HepG2 (cell line): ENCODE measurements at regions of chr1 and their contacts with region 1.

Region 1: DNA sequence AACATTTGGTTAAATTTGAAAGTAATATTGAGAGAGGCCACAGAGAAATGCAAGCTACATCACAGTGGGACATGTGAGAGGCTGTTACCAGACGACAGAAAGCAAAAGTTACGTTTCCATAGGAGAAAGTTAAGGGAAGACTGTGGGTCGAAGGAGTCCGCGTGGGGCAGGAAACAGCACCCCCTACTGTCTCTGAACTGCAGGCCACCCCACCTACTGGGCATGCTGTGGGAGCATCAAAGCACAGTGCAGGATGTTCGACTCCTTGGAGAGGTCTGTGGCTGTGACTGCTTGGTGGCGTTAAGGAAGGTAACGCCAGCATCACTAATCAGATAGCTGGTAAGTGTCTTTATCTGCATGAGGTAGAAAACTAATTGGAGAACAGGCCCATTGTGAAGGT is 123.9 kb downstream of the PTBP2 start:
- DNase-seq: peak; percentile 15
- ATAC-seq: peak; percentile 100
- H3K4me3 ChIP-seq: no peak overlapping the region
- H3K27ac ChIP-seq: no peak overlapping the region
- H3K4me1 ChIP-seq: no peaks in the 10 kb centered on the region
- H3K27me3 ChIP-seq: no peaks in the 10 kb centered on the region
- CTCF ChIP-seq: peak; percentile 91
- EP300 ChIP-seq: no peak
- POLR2A ChIP-seq: no peak
- RAD21 ChIP-seq: peak; percentile 77

Region 2: DNA sequence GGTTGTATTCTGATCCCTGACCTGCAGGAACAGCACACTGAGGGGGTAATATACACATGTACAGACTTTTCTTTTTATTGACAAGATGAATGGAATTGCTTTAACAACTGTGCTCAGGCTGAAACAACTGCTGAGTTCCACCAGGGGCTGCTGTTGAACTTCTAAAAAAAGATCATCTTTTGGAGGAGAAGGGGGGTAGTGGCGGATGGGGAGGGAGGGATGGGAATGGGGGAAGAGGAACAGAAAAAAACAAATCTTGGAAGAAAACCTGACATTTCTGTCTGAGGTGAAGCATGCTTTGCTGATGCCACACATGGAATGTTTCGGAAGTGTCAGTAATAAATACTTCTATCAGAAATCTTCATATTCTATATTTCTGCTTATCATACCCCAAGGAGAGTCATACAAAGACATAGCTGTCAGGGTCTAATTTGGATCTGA is 1536.4 kb before region 1 on chr1:
- CTCF ChIA-PET with region 1: no interaction called
- POLR2A ChIA-PET with region 1: no interaction called
- in situ Hi-C with region 1: no loop called
- intact Hi-C with region 1: loop called (anchors 2 kb)
- DNase-seq: peak; percentile 32
- ATAC-seq: peak; percentile 86
- H3K4me3 ChIP-seq: no peak overlapping the region
- H3K27ac ChIP-seq: no peak overlapping the region
- H3K4me1 ChIP-seq: no peaks in the 10 kb centered on the region
- H3K27me3 ChIP-seq: no peaks in the 10 kb centered on the region
- CTCF ChIP-seq: peak; percentile 60
- EP300 ChIP-seq: no peak
- POLR2A ChIP-seq: no peak
- RAD21 ChIP-seq: no peak

Region 3: GRCh38 chr1:96236156-96236739 is 609.2 kb before region 1 on chr1:
- CTCF ChIA-PET with region 1: interaction called, 9 read pairs
- POLR2A ChIA-PET with region 1: no interaction called
- in situ Hi-C with region 1: loop called (anchors 5 kb)
- intact Hi-C with region 1: no loop called
- DNase-seq: peak; percentile 10
- ATAC-seq: no peak
- H3K4me3 ChIP-seq: no peak overlapping the region
- H3K27ac ChIP-seq: no peak overlapping the region
- H3K4me1 ChIP-seq: no peaks in the 10 kb centered on the region
- H3K27me3 ChIP-seq: no peaks in the 10 kb centered on the region
- CTCF ChIP-seq: peak; percentile 49
- EP300 ChIP-seq: no peak
- POLR2A ChIP-seq: no peak
- RAD21 ChIP-seq: no peak

Region 4: DNA sequence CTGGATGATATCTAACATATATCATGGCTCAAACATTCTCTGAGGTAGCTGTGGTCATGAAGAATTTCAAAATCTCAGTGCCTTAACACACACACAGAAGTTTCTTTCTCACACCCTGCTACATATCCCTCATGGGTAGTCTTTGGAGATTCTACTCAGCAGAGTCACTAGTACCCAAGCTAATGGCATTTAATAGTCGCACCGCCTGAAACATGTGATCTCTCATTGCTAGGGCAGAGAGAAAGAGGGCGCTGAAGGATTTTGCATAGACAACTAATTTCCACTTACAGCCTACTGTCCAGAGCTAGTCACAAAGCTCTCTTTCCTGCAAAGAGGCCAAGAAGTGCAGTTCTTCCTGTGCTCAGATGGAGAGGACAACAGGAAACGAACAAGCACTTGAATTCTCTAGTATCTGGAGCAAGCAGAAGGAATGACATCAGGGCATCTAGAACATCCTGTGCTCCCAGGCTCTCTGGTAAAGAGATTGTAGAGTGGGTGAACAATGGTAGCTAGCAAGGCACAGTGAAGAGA is 307.3 kb before region 1 on chr1:
- CTCF ChIA-PET with region 1: no interaction called
- POLR2A ChIA-PET with region 1: no interaction called
- in situ Hi-C with region 1: loop called (anchors 5 kb)
- intact Hi-C with region 1: loop called (anchors 2 kb)
- DNase-seq: peak; percentile 31
- ATAC-seq: peak; percentile 96
- H3K4me3 ChIP-seq: no peak overlapping the region
- H3K27ac ChIP-seq: no peak overlapping the region
- H3K4me1 ChIP-seq: no peaks in the 10 kb centered on the region
- H3K27me3 ChIP-seq: 0 out of 5 replicates have a peak, but pooled peaks cover 0 to 3% of the 10 kb centered on the region in 2 experiments
- CTCF ChIP-seq: peak; percentile 69
- EP300 ChIP-seq: no peak
- POLR2A ChIP-seq: no peak
- RAD21 ChIP-seq: no peak

Region 5: DNA sequence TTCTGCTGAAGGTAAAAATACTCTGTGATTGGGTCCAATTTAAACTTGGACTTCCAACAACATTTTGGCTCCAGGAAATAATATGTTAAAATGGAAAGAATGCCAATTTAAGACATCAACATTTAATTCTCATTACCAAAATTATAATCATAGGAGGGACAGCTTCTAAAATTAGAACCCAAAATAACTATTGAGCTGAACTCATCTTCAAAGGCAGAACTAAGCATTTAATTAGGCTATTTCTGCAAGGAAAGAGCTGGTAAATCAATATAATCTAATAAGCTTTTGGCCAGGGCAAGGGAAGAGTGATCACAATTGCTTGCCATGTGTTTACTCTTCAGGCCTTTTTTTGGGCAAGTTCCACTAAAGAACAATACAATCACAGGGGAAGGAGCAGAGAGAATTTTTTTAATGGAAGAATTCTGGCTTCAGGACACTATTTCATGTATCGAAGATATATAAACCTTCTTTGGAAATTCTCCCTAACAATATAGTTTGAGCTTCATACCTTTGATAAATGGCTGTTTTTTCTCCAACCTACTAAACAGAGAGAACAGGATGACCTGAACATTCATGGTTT is 257.0 kb before region 1 on chr1:
- CTCF ChIA-PET with region 1: no interaction called
- POLR2A ChIA-PET with region 1: no interaction called
- in situ Hi-C with region 1: no loop called
- intact Hi-C with region 1: loop called (anchors 5 kb)
- DNase-seq: no peak
- ATAC-seq: no peak
- H3K4me3 ChIP-seq: no peak overlapping the region
- H3K27ac ChIP-seq: no peak overlapping the region
- H3K4me1 ChIP-seq: no peaks in the 10 kb centered on the region
- H3K27me3 ChIP-seq: no peaks in the 10 kb centered on the region
- CTCF ChIP-seq: no peak
- EP300 ChIP-seq: no peak
- POLR2A ChIP-seq: no peak
- RAD21 ChIP-seq: no peak